ENCODE measurements at regions of chr4 and their contacts with region 1.

Region 1: DNA sequence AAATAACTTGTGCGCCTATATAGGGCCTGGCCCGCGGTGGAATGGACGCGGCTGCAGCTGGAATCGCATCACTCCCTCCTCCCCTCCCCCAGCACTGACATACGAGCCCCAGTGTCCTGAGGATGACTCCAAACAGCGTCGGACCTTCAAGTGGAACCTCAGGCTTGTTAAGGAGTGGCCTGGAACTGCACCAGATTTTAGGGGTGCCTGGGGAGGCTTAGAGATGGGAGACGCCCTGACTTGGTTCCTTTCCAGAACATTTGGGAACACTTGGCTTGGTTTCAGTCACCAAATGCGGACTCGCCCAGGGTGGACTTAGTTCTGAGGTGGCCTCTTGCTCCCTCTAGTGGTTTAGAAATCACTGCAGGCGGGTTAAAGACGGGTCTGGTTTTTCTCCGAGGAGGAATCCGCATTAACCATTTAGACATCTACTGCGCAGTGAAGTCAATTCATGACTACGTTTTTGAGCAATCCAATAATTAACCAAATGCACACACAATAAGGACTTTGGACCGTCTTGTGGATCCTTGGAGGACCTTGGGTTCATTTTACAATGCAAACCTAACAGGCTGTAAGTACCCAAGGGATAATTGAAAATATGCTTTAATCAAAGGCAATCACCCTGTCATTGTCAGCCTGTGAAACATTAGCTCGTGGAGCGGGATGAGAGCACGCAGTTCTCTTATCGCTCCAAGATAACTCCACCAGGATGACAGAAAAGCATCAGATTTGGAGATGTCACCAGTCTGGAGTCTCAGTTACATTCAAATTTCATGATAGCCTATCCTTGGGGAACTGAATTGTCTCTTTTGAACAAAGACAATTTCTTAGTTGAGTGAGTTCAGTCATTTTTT is 11.2 kb upstream of the PDGFRA start:
- DNase-seq: peak; percentile 64 to 67
- H3K4me3 ChIP-seq: peak overlapping the region in 1 of 3 donors; percentile 28
- H3K27ac ChIP-seq: no peak overlapping the region
- H3K4me1 ChIP-seq: peaks cover 0 to 8% of the 10 kb centered on the region in 2 donors
- H3K27me3 ChIP-seq: no peaks in the 10 kb centered on the region
- CTCF ChIP-seq: peak; percentile 79 to 96 (median 86)
- POLR2A ChIP-seq: no peak

Region 2: GRCh38 chr4:53929955-53930798 is 287.7 kb before region 1 on chr4:
- intact Hi-C with region 1: loop called (anchors 2 kb)
- DNase-seq: peak; percentile 81 to 83
- H3K4me3 ChIP-seq: no peak overlapping the region
- H3K27ac ChIP-seq: no peak overlapping the region
- H3K4me1 ChIP-seq: peaks cover 0 to 5% of the 10 kb centered on the region in 2 donors
- H3K27me3 ChIP-seq: no peaks in the 10 kb centered on the region
- CTCF ChIP-seq: peak in 5 of 6 experiments; percentile 45 to 88 (median 72)
- POLR2A ChIP-seq: no peak